ENCODE measurements at regions of chr2 and their contacts with region 1.

Region 1: DNA sequence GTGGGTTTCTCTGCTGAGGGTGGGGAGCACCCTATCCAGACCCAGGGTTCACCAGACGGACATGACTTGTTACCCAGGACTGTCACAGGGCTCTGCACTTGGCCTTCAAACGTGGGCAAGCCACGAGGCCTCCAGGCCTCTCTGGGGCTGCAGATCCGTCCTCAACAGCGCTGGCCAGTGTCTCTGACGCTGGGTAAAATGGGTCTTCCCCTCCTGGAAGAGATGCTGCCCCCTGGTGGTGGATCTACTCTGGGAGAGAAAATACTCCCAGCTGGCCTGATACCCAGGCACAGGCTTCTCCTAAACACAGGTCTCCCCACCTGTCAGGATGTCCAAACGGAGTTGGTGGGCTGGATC is 3.7 kb downstream of the GPR17 start:
- DNase-seq: peak; percentile 90
- ATAC-seq: peak; percentile 32 to 35

Region 2: GRCh38 chr2:127226520-127227263 is 423.0 kb before region 1 on chr2:
- intact Hi-C with region 1: no loop called
- DNase-seq: no peak
- ATAC-seq: peak in 1 of 2 donors; percentile 29

Region 3: GRCh38 chr2:127516031-127516762 is 133.5 kb before region 1 on chr2:
- intact Hi-C with region 1: loop called in 1 of 2 experiments (anchors 10 kb)
- DNase-seq: peak; percentile 88
- ATAC-seq: peak; percentile 88 to 90